Caco-2 (cell line): ENCODE measurements at regions of chr9 and their contacts with region 1.

Region 1: GRCh38 chr9:4508246-4508906 is 18.1 kb downstream of the SLC1A1 start:
- DNase-seq: peak; percentile 62
- H3K4me3 ChIP-seq: no peak overlapping the region
- H3K4me3 Mint-ChIP-seq: peak overlapping the region; percentile 61
- H3K27ac Mint-ChIP-seq: peak overlapping the region; percentile 88
- H3K4me1 ChIP-seq: peaks cover 58% of the 10 kb centered on the region
- H3K4me1 Mint-ChIP-seq: peaks cover 42% of the 10 kb centered on the region
- H3K27me3 ChIP-seq: no peaks in the 10 kb centered on the region
- H3K27me3 Mint-ChIP-seq: no peaks in the 10 kb centered on the region
- CTCF ChIP-seq: no peak

Region 2: DNA sequence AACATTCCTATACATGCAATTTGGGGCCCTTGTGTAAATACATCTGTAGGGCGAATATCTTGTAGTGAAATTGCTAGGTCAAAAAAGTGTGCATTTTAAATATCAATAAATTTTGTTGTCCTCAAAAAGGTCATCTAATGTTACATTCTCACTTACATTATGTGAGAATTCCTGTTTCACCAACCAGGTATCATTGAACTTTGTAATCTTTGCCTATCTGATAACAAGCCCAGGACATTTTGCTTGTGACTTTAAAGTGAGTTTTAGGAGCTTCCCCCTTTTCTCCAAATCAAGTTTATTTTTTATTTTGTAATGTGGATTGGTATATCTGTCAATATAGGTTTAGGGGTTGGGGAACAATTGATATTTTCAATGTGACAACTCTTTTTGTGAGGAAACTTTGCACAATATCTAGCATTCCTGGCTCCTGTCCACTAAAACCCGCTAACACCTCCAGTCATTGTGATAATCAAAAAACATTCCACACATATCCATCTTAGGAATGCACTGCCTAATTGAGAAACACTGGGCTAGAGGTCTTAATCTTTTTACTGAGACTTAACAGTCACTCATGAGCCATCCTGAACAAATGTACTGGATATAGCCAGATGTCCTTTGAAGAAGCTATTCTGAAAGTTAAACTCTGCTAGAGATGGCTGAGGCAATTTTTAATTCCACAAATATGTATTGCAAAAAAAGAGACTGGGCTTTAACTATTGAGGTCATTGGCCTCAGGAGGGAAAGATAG is 90.6 kb before region 1 on chr9:
- CTCF ChIA-PET with region 1: no interaction called
- POLR2A ChIA-PET with region 1: no interaction called
- intact Hi-C with region 1: loop called (anchors 1 kb)
- DNase-seq: peak in 1 of 2 experiments; percentile 49
- H3K4me3 ChIP-seq: no peak overlapping the region
- H3K4me3 Mint-ChIP-seq: peak overlapping the region; percentile 59
- H3K27ac Mint-ChIP-seq: peak overlapping the region; percentile 74
- H3K4me1 ChIP-seq: peaks cover 60% of the 10 kb centered on the region
- H3K4me1 Mint-ChIP-seq: peaks cover 42% of the 10 kb centered on the region
- H3K27me3 ChIP-seq: no peaks in the 10 kb centered on the region
- H3K27me3 Mint-ChIP-seq: no peaks in the 10 kb centered on the region
- CTCF ChIP-seq: no peak

Region 3: DNA sequence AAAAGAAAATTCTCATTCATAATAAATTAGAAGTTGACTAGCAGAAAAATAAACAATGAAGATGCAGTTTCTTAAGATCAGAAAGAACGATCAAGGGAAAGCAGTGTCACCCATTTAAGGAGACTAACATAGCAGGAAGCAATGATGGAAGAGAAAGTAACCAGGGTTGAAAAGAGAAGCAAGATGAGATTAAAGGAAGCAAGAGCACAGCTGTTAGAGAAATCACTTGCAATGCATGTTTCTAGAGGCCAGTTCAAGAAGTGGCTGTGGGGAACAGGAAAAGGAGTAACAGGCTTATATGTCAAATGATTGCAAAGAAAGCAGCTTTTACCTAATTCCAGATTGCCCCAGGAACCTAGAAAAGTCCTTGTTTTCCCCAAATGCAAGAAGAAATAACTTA is 64.9 kb before region 1 on chr9:
- CTCF ChIA-PET with region 1: no interaction called
- POLR2A ChIA-PET with region 1: no interaction called
- intact Hi-C with region 1: no loop called
- DNase-seq: no peak
- H3K4me3 ChIP-seq: no peak overlapping the region
- H3K4me3 Mint-ChIP-seq: no peak overlapping the region
- H3K27ac Mint-ChIP-seq: no peak overlapping the region
- H3K4me1 ChIP-seq: no peaks in the 10 kb centered on the region
- H3K4me1 Mint-ChIP-seq: no peaks in the 10 kb centered on the region
- H3K27me3 ChIP-seq: no peaks in the 10 kb centered on the region
- H3K27me3 Mint-ChIP-seq: no peaks in the 10 kb centered on the region
- CTCF ChIP-seq: no peak

Region 4: GRCh38 chr9:4489919-4490704 is 18.3 kb before region 1 on chr9 and contains the start of gene SLC1A1:
- CTCF ChIA-PET with region 1: no interaction called
- POLR2A ChIA-PET with region 1: interaction called, 3 read pairs
- intact Hi-C with region 1: loop called (anchors 1 kb)
- DNase-seq: peak; percentile 73 to 83
- H3K4me3 ChIP-seq: peak within 1 kb of the TSS; percentile 69
- H3K4me3 Mint-ChIP-seq: peak within 1 kb of the TSS; percentile 82
- H3K27ac Mint-ChIP-seq: peak within 1 kb of the TSS; percentile 97
- H3K4me1 ChIP-seq: peaks cover 40% of the 10 kb centered on the region
- H3K4me1 Mint-ChIP-seq: peaks cover 17% of the 10 kb centered on the region
- H3K27me3 ChIP-seq: no peaks in the 10 kb centered on the region
- H3K27me3 Mint-ChIP-seq: no peaks in the 10 kb centered on the region
- CTCF ChIP-seq: no peak
- total RNA-seq, gene SLC1A1: 43.3 and 53.1 TPM in 2 replicates

Region 5: DNA sequence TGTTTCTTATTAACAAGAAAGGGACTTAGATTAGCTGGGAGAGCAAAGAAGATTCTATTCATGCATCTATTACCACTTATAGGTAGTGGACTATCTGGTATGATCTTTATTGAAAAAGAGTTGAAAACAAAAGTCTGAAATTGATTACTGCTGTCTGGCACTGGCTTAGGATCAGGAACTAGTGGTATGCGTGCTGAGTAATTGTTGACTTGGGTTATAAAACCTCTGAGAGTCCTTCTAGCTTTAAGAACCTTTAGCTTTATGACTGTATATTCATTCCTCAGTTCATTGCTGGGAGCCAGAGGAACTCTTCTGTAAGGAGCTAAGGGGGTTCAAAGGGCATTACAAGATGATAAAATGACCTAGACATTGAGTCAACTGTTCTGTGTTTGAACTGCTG is 10.5 kb before region 1 on chr9:
- CTCF ChIA-PET with region 1: no interaction called
- POLR2A ChIA-PET with region 1: no interaction called
- intact Hi-C with region 1: loop called (anchors 1 kb)
- DNase-seq: peak; percentile 58 to 69
- H3K4me3 ChIP-seq: no peak overlapping the region
- H3K4me3 Mint-ChIP-seq: no peak overlapping the region
- H3K27ac Mint-ChIP-seq: no peak overlapping the region
- H3K4me1 ChIP-seq: peaks cover 82% of the 10 kb centered on the region
- H3K4me1 Mint-ChIP-seq: peaks cover 40% of the 10 kb centered on the region
- H3K27me3 ChIP-seq: no peaks in the 10 kb centered on the region
- H3K27me3 Mint-ChIP-seq: no peaks in the 10 kb centered on the region
- CTCF ChIP-seq: no peak

Region 6: GRCh38 chr9:4530375-4530774 is 22.0 kb after region 1 on chr9:
- CTCF ChIA-PET with region 1: no interaction called
- POLR2A ChIA-PET with region 1: no interaction called
- intact Hi-C with region 1: no loop called
- DNase-seq: no peak
- H3K4me3 ChIP-seq: no peak overlapping the region
- H3K4me3 Mint-ChIP-seq: no peak overlapping the region
- H3K27ac Mint-ChIP-seq: no peak overlapping the region
- H3K4me1 ChIP-seq: no peaks in the 10 kb centered on the region
- H3K4me1 Mint-ChIP-seq: no peaks in the 10 kb centered on the region
- H3K27me3 ChIP-seq: no peaks in the 10 kb centered on the region
- H3K27me3 Mint-ChIP-seq: no peaks in the 10 kb centered on the region
- CTCF ChIP-seq: no peak